ENCODE measurements at regions of chr5 and their contacts with region 1.

Region 1: DNA sequence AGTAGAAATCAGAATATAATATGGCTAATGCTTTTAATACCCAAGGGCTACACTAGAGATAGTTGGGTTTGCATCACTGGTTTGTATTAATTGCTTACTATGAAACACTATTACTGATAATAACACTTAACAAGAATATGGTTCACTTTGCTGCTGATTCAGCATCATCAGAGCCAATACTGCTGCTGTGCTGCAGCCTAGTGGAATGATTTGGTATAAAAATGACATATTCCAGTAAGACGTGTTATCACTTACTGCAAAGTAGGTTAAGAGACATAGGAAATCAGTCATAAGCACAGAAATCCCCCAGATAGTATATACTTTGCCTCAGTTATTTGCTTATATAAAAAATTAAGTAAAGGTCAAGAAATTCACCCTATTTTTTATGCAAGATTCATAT is 2.8 kb downstream of the CDH10 start:
- DNase-seq: peak; percentile 2
- H3K4me3 Mint-ChIP-seq: no peak overlapping the region
- H3K27ac Mint-ChIP-seq: no peak overlapping the region
- H3K4me1 Mint-ChIP-seq: no peaks in the 10 kb centered on the region
- H3K27me3 Mint-ChIP-seq: no peaks in the 10 kb centered on the region
- CTCF ChIP-seq: peak; percentile 25

Region 2: GRCh38 chr5:24444414-24444813 is 197.6 kb before region 1 on chr5:
- CTCF ChIA-PET with region 1: no interaction called
- intact Hi-C with region 1: loop called (anchors 10 kb)
- DNase-seq: no peak
- H3K4me3 Mint-ChIP-seq: no peak overlapping the region
- H3K27ac Mint-ChIP-seq: no peak overlapping the region
- H3K4me1 Mint-ChIP-seq: no peaks in the 10 kb centered on the region
- H3K27me3 Mint-ChIP-seq: no peaks in the 10 kb centered on the region
- CTCF ChIP-seq: no peak

Region 3: DNA sequence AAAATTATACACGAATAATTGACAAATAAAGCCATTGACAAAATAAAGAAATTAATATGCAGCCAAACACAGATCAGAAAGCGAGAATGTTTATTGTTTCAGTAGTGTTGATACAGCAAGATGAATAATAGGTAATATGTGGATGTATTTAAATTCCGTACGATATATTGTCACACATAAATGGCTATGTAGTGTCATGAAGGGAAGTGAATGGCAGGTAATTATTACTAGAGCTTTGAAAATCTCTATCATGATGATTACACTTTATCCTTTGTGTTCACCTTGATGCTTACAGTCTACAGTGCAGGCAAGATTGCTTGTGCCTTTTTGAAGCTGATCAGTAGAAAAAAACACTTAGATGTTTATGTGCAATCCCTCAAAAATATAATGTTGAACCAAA is 26.0 kb after region 1 on chr5:
- CTCF ChIA-PET with region 1: no interaction called
- intact Hi-C with region 1: no loop called
- DNase-seq: no peak
- H3K4me3 Mint-ChIP-seq: no peak overlapping the region
- H3K27ac Mint-ChIP-seq: no peak overlapping the region
- H3K4me1 Mint-ChIP-seq: no peaks in the 10 kb centered on the region
- H3K27me3 Mint-ChIP-seq: no peaks in the 10 kb centered on the region
- CTCF ChIP-seq: no peak

Measured in Calu3 (cell line).